ENCODE measurements at regions of chr9 and their contacts with region 1.

Region 1: GRCh38 chr9:125200210-125201047 is at the start of gene RABEPK:
- DNase-seq: peak; percentile 61
- ATAC-seq: peak; percentile 99
- H3K4me3 ChIP-seq: peak within 1 kb of the TSS; percentile 81 to 87
- H3K27ac ChIP-seq: peak within 1 kb of the TSS; percentile 93
- H3K4me1 ChIP-seq: peaks cover 6% of the 10 kb centered on the region
- H3K27me3 ChIP-seq: no peaks in the 10 kb centered on the region
- CTCF ChIP-seq: no peak
- total RNA-seq, gene RABEPK: 33.9 TPM

Region 2: DNA sequence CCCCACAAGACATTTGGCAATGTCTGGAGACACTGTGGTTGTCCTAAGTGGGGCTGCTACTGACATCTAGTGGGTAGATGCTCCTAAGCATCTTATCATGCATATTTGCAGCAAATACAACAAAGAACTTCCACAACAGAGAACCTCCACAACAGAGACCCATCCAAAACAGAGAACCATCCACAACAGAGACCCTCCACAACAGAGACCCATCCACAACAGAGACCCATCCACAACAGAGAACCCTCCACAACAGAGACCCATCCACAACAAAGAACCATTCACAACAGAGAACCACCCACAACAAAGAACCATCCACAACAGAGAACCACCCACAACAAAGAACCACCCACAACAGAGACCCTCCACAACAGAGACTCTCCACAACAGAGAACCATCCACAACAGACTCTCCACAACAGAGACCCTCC is 305.7 kb before region 1 on chr9:
- CTCF ChIA-PET with region 1: no interaction called
- POLR2A ChIA-PET with region 1: interaction called, 13 read pairs
- in situ Hi-C with region 1: no loop called
- intact Hi-C with region 1: no loop called
- DNase-seq: no peak
- ATAC-seq: peak; percentile 79
- H3K4me3 ChIP-seq: no peak overlapping the region
- H3K27ac ChIP-seq: no peak overlapping the region
- H3K4me1 ChIP-seq: no peaks in the 10 kb centered on the region
- H3K27me3 ChIP-seq: no peaks in the 10 kb centered on the region
- CTCF ChIP-seq: no peak; the same call in 1 of the 2 replicates

Region 3: GRCh38 chr9:125189361-125190289 is 10.8 kb before region 1 on chr9 and contains the start of gene PPP6C:
- CTCF ChIA-PET with region 1: no interaction called
- POLR2A ChIA-PET with region 1: interaction called, 10 read pairs
- in situ Hi-C with region 1: no loop called
- intact Hi-C with region 1: no loop called
- DNase-seq: peak; percentile 67
- ATAC-seq: peak; percentile 99
- H3K4me3 ChIP-seq: peak within 1 kb of the TSS; percentile 89 to 93
- H3K27ac ChIP-seq: peak within 1 kb of the TSS; percentile 91
- H3K4me1 ChIP-seq: no peaks in the 10 kb centered on the region
- H3K27me3 ChIP-seq: no peaks in the 10 kb centered on the region
- CTCF ChIP-seq: peak; percentile 79
- total RNA-seq, gene PPP6C: 27.3 TPM

Region 4: DNA sequence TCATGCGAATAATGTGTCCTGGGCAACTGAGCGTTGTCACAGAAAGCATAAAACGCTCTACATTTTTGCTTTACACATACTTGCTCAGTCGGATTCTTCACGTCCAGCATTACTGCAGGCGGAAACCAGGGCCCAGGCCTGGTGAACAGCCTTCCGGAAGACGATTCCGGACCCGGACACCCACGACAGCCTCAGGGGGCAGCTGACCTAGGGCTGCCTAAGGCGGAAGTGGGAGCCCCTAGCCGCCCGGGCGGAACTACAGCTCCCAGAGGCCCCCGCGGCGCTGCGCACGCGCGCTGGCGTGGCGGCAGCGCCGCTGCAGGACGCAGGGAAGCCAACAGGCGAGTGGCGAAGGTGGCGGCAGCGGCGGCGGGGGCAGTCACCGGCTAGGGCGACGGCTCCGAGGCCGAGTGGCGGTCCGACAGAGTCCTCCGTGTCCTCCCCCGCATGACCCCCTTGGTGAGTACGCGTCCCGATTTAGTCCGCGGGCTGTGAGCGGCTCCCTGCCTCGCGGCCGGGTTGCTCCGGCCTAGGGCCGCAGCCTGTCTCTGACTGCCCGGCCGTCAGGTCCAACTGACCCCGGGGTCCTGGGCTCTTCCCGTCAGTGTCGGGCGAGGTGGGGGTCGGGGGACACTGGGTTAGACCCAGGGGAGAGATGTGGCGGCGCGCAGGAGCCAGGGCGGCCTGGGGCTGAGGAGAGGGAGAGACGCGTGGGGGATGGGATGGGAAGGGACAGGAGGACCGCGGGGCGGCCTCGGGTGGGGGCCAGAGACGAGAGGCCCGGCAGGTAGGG is 61.3 kb after region 1 on chr9 and contains the start of gene GAPVD1:
- CTCF ChIA-PET with region 1: no interaction called
- POLR2A ChIA-PET with region 1: interaction called, 13 read pairs
- in situ Hi-C with region 1: no loop called
- intact Hi-C with region 1: no loop called
- DNase-seq: no peak
- ATAC-seq: peak; percentile 99
- H3K4me3 ChIP-seq: peak within 1 kb of the TSS; percentile 91
- H3K27ac ChIP-seq: peak within 1 kb of the TSS; percentile 85
- H3K4me1 ChIP-seq: peaks cover 11% of the 10 kb centered on the region
- H3K27me3 ChIP-seq: no peaks in the 10 kb centered on the region
- CTCF ChIP-seq: no peak; the same call in none of the 2 replicates
- total RNA-seq, gene GAPVD1: 48.6 TPM